A673 (cell line): ENCODE measurements at regions of chr19 and their contacts with region 1.

Region 1: GRCh38 chr19:4161415-4162077 is 8.1 kb downstream of the CREB3L3 start:
- DNase-seq: no peak
- H3K4me3 ChIP-seq: no peak overlapping the region
- H3K27ac ChIP-seq: no peak overlapping the region
- H3K4me1 ChIP-seq: no peaks in the 10 kb centered on the region
- H3K27me3 ChIP-seq: peaks cover 16% of the 10 kb centered on the region
- CTCF ChIP-seq: no peak

Region 2: DNA sequence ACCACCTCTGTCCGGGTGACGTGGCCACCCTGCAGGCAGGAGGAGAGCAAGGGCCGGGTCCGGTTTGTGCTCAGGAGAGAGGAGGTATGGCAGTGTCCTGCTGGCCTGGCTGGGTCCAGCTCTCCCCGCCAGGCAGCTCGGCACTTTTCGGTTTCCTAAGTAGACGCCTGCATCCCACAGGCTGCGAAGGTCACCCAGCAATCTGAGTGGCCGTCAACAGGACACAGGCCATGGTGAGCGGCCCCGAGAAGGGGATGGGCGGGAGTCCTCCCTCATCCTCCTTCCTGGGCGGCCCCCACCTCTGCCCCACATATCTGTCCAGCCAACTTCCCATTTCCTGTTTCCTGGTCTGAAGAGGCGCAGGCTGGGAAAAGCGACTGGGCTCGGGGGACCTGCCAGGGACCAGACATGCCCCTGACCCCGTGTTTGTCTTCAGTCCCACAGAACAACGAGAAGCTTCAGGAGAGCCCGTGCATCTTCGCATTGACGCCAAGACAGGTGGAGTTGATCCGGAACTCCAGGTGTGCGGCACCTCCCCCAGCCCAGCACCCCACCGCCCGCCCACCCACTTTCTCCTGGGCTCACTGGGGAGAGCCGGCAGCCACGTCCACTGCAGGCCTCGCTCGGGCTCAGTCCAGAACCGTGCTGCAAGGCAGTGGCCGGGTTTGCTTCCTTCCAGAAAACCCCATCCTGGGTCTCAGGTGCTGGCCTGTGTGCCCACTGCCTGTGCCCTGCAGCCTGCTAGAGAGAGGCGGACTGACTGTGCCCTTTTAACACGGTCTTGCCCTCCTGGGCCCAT is 137.7 kb before region 1 on chr19:
- CTCF ChIA-PET with region 1: no interaction called
- POLR2A ChIA-PET with region 1: interaction called, 10 read pairs
- intact Hi-C with region 1: no loop called
- DNase-seq: no peak
- H3K4me3 ChIP-seq: no peak overlapping the region
- H3K27ac ChIP-seq: no peak overlapping the region
- H3K4me1 ChIP-seq: no peaks in the 10 kb centered on the region
- H3K27me3 ChIP-seq: no peaks in the 10 kb centered on the region
- CTCF ChIP-seq: no peak

Region 3: GRCh38 chr19:4304530-4305252 is 143.1 kb after region 1 on chr19 and contains the start of gene FSD1:
- CTCF ChIA-PET with region 1: no interaction called
- POLR2A ChIA-PET with region 1: no interaction called
- intact Hi-C with region 1: no loop called
- DNase-seq: peak; percentile 86
- H3K4me3 ChIP-seq: peak within 1 kb of the TSS; percentile 46
- H3K27ac ChIP-seq: no peak within 1 kb of the TSS
- H3K4me1 ChIP-seq: no peaks in the 10 kb centered on the region
- H3K27me3 ChIP-seq: no peaks in the 10 kb centered on the region
- CTCF ChIP-seq: no peak
- total RNA-seq, gene FSD1: 10.4 and 14.4 TPM in 2 replicates